Caco-2 (cell line): ENCODE measurements at regions of chr5 and their contacts with region 1.

Region 1: DNA sequence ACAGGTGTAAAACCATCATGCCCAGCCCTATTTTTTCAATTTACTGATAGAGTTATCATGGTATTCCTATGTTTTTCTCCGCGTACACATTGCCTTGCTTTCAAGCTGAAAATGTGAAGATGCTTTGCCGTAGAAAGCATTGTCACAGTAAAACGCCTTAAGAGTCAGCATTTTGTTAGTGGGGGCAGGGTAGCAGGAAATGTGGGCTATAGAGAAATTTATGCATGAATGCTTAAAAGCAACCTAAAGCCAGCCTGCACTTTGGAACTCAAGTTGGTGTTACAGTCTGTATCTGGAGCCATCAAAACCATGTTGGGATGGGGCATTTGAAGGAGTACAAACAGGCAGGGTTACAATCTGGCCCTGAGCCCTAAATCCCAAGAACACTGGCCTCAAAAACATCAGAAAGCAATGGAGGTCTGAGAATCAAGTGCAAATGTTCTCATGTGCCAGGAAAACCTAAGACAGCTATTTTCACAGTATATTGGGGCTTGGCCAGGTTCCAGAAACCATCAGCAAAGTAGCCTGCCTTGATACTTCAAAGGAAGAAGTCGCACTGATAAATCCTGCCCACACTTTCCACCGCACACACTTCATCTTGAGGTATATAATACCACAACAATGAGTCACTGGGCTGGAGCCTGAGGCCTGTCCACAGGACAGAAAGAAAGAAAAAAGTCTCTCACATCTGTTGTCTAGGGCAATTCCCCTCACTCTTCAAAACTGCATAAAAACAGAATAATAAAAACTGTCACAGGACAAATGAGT is 313.8 kb downstream of the ENC1 start:
- DNase-seq: peak; percentile 56 to 88
- H3K4me3 ChIP-seq: no peak overlapping the region
- H3K4me3 Mint-ChIP-seq: no peak overlapping the region
- H3K27ac Mint-ChIP-seq: peak overlapping the region; percentile 84
- H3K4me1 ChIP-seq: peaks cover 32% of the 10 kb centered on the region
- H3K4me1 Mint-ChIP-seq: peaks cover 15% of the 10 kb centered on the region
- H3K27me3 ChIP-seq: no peaks in the 10 kb centered on the region
- H3K27me3 Mint-ChIP-seq: no peaks in the 10 kb centered on the region
- CTCF ChIP-seq: no peak

Region 2: DNA sequence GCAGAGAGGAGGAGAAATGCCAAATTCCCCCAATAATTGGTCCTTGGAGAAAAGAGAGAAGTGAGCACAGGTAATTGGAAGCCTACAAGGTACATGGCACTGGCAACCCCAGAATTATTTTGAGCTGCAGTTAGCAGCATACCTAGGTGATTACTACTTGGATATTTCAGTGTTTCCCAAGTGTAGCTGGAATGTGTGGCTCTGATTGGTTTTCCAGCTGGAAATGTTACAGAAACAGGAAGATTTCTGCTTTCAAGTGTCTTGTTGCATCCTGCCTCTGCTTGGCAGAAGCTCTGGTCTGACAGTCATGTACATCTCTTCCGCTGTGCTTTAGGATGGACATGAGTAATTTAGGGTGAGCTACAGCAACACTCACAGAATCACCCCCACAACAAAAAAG is 51.7 kb after region 1 on chr5:
- CTCF ChIA-PET with region 1: no interaction called
- POLR2A ChIA-PET with region 1: no interaction called
- intact Hi-C with region 1: loop called (anchors 5 kb)
- DNase-seq: no peak
- H3K4me3 ChIP-seq: no peak overlapping the region
- H3K4me3 Mint-ChIP-seq: no peak overlapping the region
- H3K27ac Mint-ChIP-seq: no peak overlapping the region
- H3K4me1 ChIP-seq: peaks cover 43% of the 10 kb centered on the region
- H3K4me1 Mint-ChIP-seq: peaks cover 17% of the 10 kb centered on the region
- H3K27me3 ChIP-seq: no peaks in the 10 kb centered on the region
- H3K27me3 Mint-ChIP-seq: no peaks in the 10 kb centered on the region
- CTCF ChIP-seq: no peak